Activated CD4-positive, alpha-beta memory T cell treated with anti-CD3 and anti-CD28 coated beads for 36 hours (primary cell): ENCODE measurements at regions of chr22 and their contacts with region 1.

Region 1: GRCh38 chr22:23178512-23179254 is 1.6 kb upstream of the BCR start:
- DNase-seq: peak; percentile 72
- H3K4me3 Mint-ChIP-seq: no peak overlapping the region
- H3K27ac Mint-ChIP-seq: peak overlapping the region; percentile 30
- H3K4me1 Mint-ChIP-seq: peaks cover 41% of the 10 kb centered on the region
- H3K27me3 Mint-ChIP-seq: no peaks in the 10 kb centered on the region

Region 2: GRCh38 chr22:23219822-23220484 is 41.3 kb after region 1 on chr22:
- CTCF ChIA-PET with region 1: interaction called, 8 read pairs
- POLR2A ChIA-PET with region 1: interaction called, 5 read pairs
- intact Hi-C with region 1: loop called (anchors 1 kb)
- DNase-seq: peak; percentile 87
- H3K4me3 Mint-ChIP-seq: peak overlapping the region; percentile 61
- H3K27ac Mint-ChIP-seq: peak overlapping the region; percentile 76
- H3K4me1 Mint-ChIP-seq: peaks cover 94% of the 10 kb centered on the region
- H3K27me3 Mint-ChIP-seq: no peaks in the 10 kb centered on the region

Region 3: GRCh38 chr22:23251445-23252232 is 73.0 kb after region 1 on chr22:
- CTCF ChIA-PET with region 1: interaction called, 13 read pairs
- POLR2A ChIA-PET with region 1: interaction called, 3 read pairs
- intact Hi-C with region 1: no loop called
- DNase-seq: peak; percentile 54
- H3K4me3 Mint-ChIP-seq: no peak overlapping the region
- H3K27ac Mint-ChIP-seq: peak overlapping the region; percentile 13
- H3K4me1 Mint-ChIP-seq: peaks cover 51% of the 10 kb centered on the region
- H3K27me3 Mint-ChIP-seq: no peaks in the 10 kb centered on the region

Region 4: DNA sequence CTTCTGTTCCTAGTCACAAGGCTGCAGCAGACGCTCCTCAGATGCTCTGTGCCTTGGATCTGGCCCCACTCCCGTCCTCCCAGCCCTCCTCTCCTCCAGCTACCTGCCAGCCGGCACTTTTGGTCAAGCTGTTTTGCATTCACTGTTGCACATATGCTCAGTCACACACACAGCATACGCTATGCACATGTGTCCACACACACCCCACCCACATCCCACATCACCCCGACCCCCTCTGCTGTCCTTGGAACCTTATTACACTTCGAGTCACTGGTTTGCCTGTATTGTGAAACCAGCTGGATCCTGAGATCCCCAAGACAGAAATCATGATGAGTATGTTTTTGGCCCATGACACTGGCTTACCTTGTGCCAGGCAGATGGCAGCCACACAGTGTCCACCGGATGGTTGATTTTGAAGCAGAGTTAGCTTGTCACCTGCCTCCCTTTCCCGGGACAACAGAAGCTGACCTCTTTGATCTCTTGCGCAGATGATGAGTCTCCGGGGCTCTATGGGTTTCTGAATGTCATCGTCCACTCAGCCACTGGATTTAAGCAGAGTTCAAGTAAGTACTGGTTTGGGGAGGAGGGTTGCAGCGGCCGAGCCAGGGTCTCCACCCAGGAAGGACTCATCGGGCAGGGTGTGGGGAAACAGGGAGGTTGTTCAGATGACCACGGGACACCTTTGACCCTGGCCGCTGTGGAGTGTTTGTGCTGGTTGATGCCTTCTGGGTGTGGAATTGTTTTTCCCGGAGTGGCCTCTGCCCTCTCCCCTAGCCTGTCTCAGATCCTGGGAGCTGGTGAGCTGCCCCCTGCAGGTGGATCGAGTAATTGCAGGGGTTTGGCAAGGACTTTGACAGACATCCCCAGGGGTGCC is 111.4 kb after region 1 on chr22:
- CTCF ChIA-PET with region 1: interaction called, 83 read pairs
- POLR2A ChIA-PET with region 1: no interaction called
- intact Hi-C with region 1: no loop called
- DNase-seq: peak; percentile 70
- H3K4me3 Mint-ChIP-seq: no peak overlapping the region
- H3K27ac Mint-ChIP-seq: no peak overlapping the region
- H3K4me1 Mint-ChIP-seq: no peaks in the 10 kb centered on the region
- H3K27me3 Mint-ChIP-seq: no peaks in the 10 kb centered on the region